Activated B cell treated with CpG ODN at 0.5 μM for 24 hours (primary cell): ENCODE measurements at regions of chr1 and their contacts with region 1.

Region 1: GRCh38 chr1:41751804-41752513 is 166.8 kb downstream of the HIVEP3 start:
- DNase-seq: no peak
- ATAC-seq: peak; percentile 29
- H3K4me3 Mint-ChIP-seq: peak overlapping the region; percentile 68
- H3K27ac Mint-ChIP-seq: peak overlapping the region; percentile 89
- H3K4me1 Mint-ChIP-seq: peaks cover 65% of the 10 kb centered on the region
- H3K27me3 Mint-ChIP-seq: no peaks in the 10 kb centered on the region
- CTCF ChIP-seq: no peak

Region 2: GRCh38 chr1:40449684-40450494 is 1302.1 kb before region 1 on chr1 and contains the start of gene ZFP69B:
- CTCF ChIA-PET with region 1: no interaction called
- POLR2A ChIA-PET with region 1: interaction called, 11 read pairs
- intact Hi-C with region 1: no loop called
- DNase-seq: peak; percentile 97
- ATAC-seq: peak; percentile 80
- H3K4me3 Mint-ChIP-seq: peak within 1 kb of the TSS; percentile 86
- H3K27ac Mint-ChIP-seq: peak within 1 kb of the TSS; percentile 90
- H3K4me1 Mint-ChIP-seq: peaks cover 30% of the 10 kb centered on the region
- H3K27me3 Mint-ChIP-seq: no peaks in the 10 kb centered on the region
- CTCF ChIP-seq: no peak
- total RNA-seq, gene ZFP69B: 8.9 and 10.4 TPM in 2 replicates

Region 3: DNA sequence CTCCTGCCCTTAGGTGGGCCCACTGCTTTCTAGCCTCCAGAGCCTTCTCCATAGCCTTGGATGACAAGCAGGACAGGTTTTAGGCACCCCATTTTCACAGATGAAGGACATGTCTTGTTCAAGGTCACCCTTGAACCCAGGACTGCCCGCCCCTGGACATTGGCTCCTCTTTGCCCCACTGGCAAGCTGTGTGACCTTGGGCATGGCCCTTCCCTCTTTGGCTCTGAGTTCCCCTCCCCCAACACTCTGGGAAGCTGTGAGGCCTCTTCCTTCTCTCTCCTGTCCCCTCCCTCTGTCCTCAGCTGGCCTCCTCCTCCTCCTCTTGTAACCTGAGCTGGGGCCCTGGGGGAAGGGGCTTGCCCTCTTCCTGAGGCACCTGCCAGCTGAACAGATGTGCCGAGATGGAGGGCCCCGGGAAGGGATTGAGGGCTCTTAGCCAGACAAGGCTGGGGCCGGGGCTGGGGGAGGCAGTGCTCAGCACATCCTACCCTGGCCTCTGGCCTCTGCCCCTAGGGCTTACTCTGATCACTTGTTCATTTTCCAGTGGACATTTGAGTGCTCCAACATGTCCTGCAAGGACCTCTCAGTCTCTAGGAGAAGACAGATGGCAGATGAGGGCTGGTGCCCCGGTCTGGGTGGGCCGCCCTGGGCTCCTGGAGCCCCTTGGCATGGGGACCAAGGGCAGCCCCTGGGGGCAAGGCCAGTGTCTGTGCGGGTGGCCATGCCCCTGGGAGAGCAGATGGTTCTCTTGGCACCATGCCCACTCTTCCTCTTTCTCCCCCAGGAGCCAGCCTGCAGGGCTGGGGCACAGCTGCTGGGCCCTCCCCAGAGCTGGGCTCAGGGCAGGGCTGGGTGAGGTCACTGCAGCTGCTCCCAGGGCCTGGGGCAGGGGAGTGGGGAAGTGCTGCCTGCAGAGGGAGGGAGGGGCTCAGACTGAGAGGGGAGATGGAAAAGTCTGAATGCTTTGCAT is 380.0 kb before region 1 on chr1:
- CTCF ChIA-PET with region 1: no interaction called
- POLR2A ChIA-PET with region 1: no interaction called
- intact Hi-C with region 1: no loop called
- DNase-seq: no peak
- ATAC-seq: no peak
- H3K4me3 Mint-ChIP-seq: no peak overlapping the region
- H3K27ac Mint-ChIP-seq: no peak overlapping the region
- H3K4me1 Mint-ChIP-seq: peaks cover 4% of the 10 kb centered on the region
- H3K27me3 Mint-ChIP-seq: peaks cover 44% of the 10 kb centered on the region
- CTCF ChIP-seq: no peak

Region 4: DNA sequence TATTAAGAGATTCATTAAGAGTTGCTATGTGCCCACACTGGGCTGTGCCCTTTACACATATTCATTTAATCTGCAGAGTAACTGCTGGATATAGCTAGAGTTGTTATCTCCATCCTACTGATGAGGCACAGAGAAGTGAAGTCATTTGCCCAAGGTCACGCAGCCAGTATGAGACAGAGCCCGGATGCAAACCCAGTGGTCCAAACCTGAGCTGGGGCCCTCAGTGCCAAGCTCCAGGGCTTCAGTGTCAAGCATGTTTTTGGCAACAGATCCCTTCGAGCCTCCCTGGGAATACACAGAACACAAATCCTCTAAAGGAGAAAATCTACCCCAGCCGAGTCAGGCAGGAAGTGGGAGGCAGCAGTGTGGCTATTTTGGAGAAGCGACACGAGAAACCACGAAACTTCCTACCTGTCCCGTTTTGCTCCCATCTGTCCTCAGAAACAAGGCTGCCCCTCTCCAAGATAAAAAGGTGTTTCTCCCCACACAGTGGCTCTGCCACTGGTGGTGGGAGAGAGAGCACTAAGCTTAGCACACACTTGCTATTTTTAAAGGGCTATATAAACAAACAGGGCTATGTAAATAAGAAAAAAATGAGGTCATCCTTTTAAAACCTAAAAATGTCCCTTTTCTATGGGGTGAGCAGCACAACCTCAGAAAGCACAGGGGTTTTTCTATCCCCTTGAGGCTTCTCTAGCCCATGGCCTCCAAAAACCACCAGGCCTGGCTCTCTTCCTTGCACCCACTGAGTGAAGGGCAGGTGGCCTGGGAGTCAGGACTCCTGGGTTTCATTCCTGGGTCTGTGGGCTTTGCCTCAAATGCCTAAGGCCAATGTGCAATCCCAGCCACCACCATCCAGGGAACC is 128.9 kb before region 1 on chr1:
- CTCF ChIA-PET with region 1: no interaction called
- POLR2A ChIA-PET with region 1: interaction called, 3 read pairs
- intact Hi-C with region 1: loop called (anchors 1 kb)
- DNase-seq: no peak
- ATAC-seq: peak; percentile 92
- H3K4me3 Mint-ChIP-seq: peak overlapping the region; percentile 78
- H3K27ac Mint-ChIP-seq: peak overlapping the region; percentile 90
- H3K4me1 Mint-ChIP-seq: peaks cover 63% of the 10 kb centered on the region
- H3K27me3 Mint-ChIP-seq: no peaks in the 10 kb centered on the region
- CTCF ChIP-seq: no peak

Region 5: GRCh38 chr1:41678111-41678878 is 73.7 kb before region 1 on chr1:
- CTCF ChIA-PET with region 1: no interaction called
- POLR2A ChIA-PET with region 1: interaction called, 29 read pairs
- intact Hi-C with region 1: no loop called
- DNase-seq: no peak
- ATAC-seq: peak; percentile 75
- H3K4me3 Mint-ChIP-seq: no peak overlapping the region
- H3K27ac Mint-ChIP-seq: peak overlapping the region; percentile 44
- H3K4me1 Mint-ChIP-seq: peaks cover 49% of the 10 kb centered on the region
- H3K27me3 Mint-ChIP-seq: no peaks in the 10 kb centered on the region
- CTCF ChIP-seq: no peak

Region 6: GRCh38 chr1:41765152-41765551 is 13.2 kb after region 1 on chr1:
- CTCF ChIA-PET with region 1: interaction called, 4 read pairs
- POLR2A ChIA-PET with region 1: interaction called, 10 read pairs
- intact Hi-C with region 1: no loop called
- DNase-seq: no peak
- ATAC-seq: peak; percentile 38
- H3K4me3 Mint-ChIP-seq: peak overlapping the region; percentile 46
- H3K27ac Mint-ChIP-seq: peak overlapping the region; percentile 16
- H3K4me1 Mint-ChIP-seq: peaks cover 58% of the 10 kb centered on the region
- H3K27me3 Mint-ChIP-seq: no peaks in the 10 kb centered on the region
- CTCF ChIP-seq: no peak

Region 7: DNA sequence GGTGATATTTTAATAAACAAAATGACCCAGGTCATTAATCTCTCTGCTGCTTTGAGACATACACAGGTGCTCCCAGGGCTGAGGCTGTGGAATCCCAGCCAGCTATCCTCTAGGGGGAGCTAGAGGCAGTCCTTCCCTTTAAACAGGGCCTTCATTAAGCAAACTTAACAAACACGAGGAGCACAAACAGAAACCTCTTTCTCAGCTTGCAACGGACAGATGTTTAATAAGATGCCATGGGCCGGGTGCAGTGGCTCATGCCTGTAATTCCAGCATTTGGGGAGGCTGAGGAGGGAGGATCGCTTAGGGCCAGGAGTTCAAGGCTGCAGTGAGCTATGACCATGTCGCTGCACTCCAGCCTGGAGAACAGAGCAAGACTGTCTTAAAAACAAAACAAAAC is 60.1 kb after region 1 on chr1:
- CTCF ChIA-PET with region 1: interaction called, 3 read pairs
- POLR2A ChIA-PET with region 1: interaction called, 12 read pairs
- intact Hi-C with region 1: loop called (anchors 1 kb)
- DNase-seq: no peak
- ATAC-seq: peak; percentile 34
- H3K4me3 Mint-ChIP-seq: no peak overlapping the region
- H3K27ac Mint-ChIP-seq: no peak overlapping the region
- H3K4me1 Mint-ChIP-seq: peaks cover 35% of the 10 kb centered on the region
- H3K27me3 Mint-ChIP-seq: no peaks in the 10 kb centered on the region
- CTCF ChIP-seq: no peak

Region 8: GRCh38 chr1:41891199-41891896 is 139.4 kb after region 1 on chr1:
- CTCF ChIA-PET with region 1: no interaction called
- POLR2A ChIA-PET with region 1: interaction called, 3 read pairs
- intact Hi-C with region 1: loop called (anchors 1 kb)
- DNase-seq: peak; percentile 39
- ATAC-seq: peak; percentile 98
- H3K4me3 Mint-ChIP-seq: peak overlapping the region; percentile 83
- H3K27ac Mint-ChIP-seq: peak overlapping the region; percentile 88
- H3K4me1 Mint-ChIP-seq: peaks cover 15% of the 10 kb centered on the region
- H3K27me3 Mint-ChIP-seq: no peaks in the 10 kb centered on the region
- CTCF ChIP-seq: no peak

Region 9: DNA sequence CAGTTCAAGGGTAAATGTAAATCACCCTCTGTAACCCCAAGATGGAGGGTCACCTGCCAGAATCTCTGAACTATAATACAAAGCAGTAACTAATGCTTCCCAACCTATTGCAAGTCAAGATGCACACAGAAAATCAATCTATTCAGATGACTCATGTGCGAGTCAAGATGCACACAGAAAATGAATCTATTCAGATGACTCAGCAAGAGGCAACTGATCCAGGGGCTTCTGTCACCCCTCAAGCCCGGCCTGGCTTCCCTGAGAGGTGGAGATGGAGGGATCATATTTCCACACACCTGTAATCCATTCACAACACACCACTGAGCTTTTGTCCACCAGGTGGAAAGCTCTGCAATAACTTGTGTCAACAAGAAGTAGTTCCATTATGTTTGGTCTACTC is 184.2 kb after region 1 on chr1:
- CTCF ChIA-PET with region 1: no interaction called
- POLR2A ChIA-PET with region 1: no interaction called
- intact Hi-C with region 1: no loop called
- DNase-seq: no peak
- ATAC-seq: no peak
- H3K4me3 Mint-ChIP-seq: no peak overlapping the region
- H3K27ac Mint-ChIP-seq: no peak overlapping the region
- H3K4me1 Mint-ChIP-seq: no peaks in the 10 kb centered on the region
- H3K27me3 Mint-ChIP-seq: peaks cover 22% of the 10 kb centered on the region
- CTCF ChIP-seq: no peak